Transverse colon (tissue), 4 donors: ENCODE measurements at regions of chr5 and their contacts with region 1.

Region 1: DNA sequence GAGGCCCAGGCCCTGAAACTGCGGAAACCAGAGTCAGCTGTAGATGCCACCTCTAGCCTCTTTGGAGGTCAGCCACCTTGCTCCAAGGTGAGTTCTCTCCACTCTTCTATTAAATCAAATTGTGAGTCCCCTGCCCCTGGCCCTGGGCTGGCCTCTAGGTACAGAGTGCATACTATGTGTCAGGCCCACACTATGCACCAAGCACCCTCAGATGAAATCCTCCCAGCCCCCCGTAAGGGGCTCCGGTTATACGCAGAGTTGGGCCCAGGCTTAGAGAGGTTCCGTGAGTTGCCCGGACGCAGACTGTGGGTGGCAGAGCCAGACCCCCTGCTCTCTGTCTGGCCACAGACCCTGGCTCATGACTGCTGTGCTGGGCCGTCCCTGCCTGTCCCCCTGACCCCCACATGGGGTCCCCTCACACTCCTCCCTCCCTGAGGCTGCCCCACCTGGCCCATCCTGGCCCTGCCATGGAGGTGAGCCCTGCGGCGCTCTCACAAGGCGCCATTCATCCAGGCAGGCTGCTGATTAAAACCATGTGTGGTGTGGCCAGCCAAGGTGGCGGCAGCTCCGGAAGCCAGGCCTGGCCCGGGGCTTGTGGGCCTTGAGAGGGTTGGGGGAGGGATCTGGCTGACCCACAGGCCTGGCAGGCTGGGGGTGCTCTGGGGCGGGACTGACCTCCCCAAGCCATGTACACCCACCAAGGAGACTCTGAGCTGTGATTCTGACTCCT is 65.5 kb upstream of the SYNPO start:
- DNase-seq: no peak
- H3K4me3 ChIP-seq: no peak overlapping the region
- H3K27ac ChIP-seq: no peak overlapping the region
- H3K4me1 ChIP-seq: peaks cover 0 to 8% (median 2%) of the 10 kb centered on the region in 4 donors
- H3K27me3 ChIP-seq: no peaks in the 10 kb centered on the region
- CTCF ChIP-seq: no peak
- EP300 ChIP-seq: no peak
- POLR2A ChIP-seq: no peak

Region 2: GRCh38 chr5:150377964-150378694 is 196.9 kb before region 1 on chr5:
- in situ Hi-C with region 1: no loop called
- intact Hi-C with region 1: no loop called
- DNase-seq: no peak
- H3K4me3 ChIP-seq: no peak overlapping the region
- H3K27ac ChIP-seq: peak overlapping the region; percentile 28 to 54 (median 43)
- H3K4me1 ChIP-seq: peaks cover 0 to 6% (median 0%) of the 10 kb centered on the region in 4 donors
- H3K27me3 ChIP-seq: no peaks in the 10 kb centered on the region
- CTCF ChIP-seq: no peak
- EP300 ChIP-seq: no peak
- POLR2A ChIP-seq: no peak

Region 3: GRCh38 chr5:150672237-150672883 is 97.4 kb after region 1 on chr5:
- in situ Hi-C with region 1: loop called in 1 of 4 experiments (anchors 25 kb)
- intact Hi-C with region 1: loop called (anchors 5 kb)
- DNase-seq: no peak
- H3K4me3 ChIP-seq: peak overlapping the region; percentile 27 to 48 (median 33)
- H3K27ac ChIP-seq: peak overlapping the region in 1 of 4 donors; percentile 4
- H3K4me1 ChIP-seq: peaks cover 6 to 20% (median 15%) of the 10 kb centered on the region in 4 donors
- H3K27me3 ChIP-seq: peaks cover 30% of the 10 kb centered on the region
- CTCF ChIP-seq: no peak
- EP300 ChIP-seq: no peak
- POLR2A ChIP-seq: no peak

Region 4: GRCh38 chr5:150731669-150732242 is 156.8 kb after region 1 on chr5:
- in situ Hi-C with region 1: no loop called
- intact Hi-C with region 1: no loop called
- DNase-seq: no peak
- H3K4me3 ChIP-seq: no peak overlapping the region
- H3K27ac ChIP-seq: peak overlapping the region in 1 of 4 donors; percentile 19
- H3K4me1 ChIP-seq: peaks cover 0 to 8% (median 4%) of the 10 kb centered on the region in 4 donors
- H3K27me3 ChIP-seq: no peaks in the 10 kb centered on the region
- CTCF ChIP-seq: no peak
- EP300 ChIP-seq: no peak
- POLR2A ChIP-seq: no peak

Region 5: DNA sequence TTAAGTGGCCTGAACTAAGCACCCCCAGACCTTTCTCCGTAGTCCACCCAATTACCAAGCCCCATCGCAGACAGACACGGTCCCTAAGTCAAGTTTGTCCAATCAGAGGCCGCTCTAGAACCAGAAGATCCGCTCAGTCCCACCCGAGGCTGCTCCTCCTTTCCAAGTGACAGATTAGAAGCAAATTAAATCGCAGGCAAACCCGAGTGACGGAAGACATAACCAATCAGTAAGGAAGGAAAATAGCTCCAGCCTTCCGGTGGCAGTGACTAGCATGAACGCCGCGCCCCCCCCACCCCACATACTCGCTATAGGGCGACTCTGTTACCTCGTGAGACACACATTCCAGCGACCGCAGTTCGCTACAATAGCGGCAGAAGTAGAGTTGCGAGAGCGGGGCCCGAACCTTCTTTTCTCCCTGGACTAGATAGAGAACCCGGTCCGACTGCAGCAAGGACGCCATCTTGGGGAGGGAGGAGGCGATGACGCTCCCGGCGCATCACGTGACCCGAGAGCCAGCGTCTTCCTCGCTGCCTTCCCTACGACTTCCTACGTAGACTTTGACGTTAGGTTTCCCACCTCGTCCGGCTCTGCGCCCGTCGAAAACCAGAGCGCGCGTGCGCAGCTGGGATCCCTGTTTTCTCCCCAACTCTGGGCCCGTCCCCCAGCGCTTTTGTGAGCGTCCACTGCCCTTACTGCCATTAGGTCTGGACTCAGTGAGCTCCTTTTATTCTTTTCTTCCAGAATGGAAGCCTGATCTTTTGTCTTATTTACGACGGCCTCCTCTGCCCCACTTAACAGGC is 183.7 kb after region 1 on chr5 and contains the start of gene DCTN4:
- in situ Hi-C with region 1: no loop called
- intact Hi-C with region 1: no loop called
- DNase-seq: peak; percentile 96
- H3K4me3 ChIP-seq: peak within 1 kb of the TSS; percentile 54 to 60 (median 56)
- H3K27ac ChIP-seq: peak within 1 kb of the TSS; percentile 90 to 95 (median 94)
- H3K4me1 ChIP-seq: peaks cover 8 to 37% (median 18%) of the 10 kb centered on the region in 4 donors
- H3K27me3 ChIP-seq: no peaks in the 10 kb centered on the region
- CTCF ChIP-seq: peak in 1 of 5 experiments; percentile 16
- EP300 ChIP-seq: no peak
- POLR2A ChIP-seq: peak; percentile 47
- total RNA-seq, gene DCTN4: 23.2 to 55.3 (median 42.4) TPM

Region 6: DNA sequence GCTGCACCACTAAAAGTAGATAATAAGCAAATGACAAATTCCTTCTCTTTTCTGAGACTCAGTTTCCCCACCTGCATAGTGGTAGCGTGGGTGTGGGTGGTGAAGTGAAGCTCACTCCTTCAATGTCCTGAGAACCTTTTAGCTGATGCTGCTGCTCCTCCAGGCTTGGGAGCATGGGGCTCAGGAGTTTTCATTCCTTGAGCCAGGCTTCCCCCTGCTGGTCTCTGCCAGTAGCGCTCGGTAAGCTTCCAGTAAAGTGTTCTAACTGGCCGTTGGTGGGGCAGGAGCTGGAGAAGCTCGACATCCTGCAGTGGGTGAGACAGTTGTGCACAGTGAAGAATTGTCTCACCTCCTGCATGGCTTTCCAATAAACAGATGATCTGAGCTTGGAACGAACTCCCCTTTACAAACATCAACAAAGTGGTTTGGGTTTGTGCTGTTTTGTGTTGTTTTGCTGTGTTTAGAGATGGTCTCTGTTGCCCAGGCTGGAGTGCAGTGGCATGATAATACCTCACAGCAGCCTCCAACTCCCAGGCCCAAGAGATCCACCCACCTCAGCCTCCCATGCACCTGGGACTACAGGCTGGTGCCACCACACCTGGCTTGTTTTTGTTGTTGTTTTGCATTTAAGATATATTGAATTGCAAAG is 1077.1 kb after region 1 on chr5:
- in situ Hi-C with region 1: no loop called
- intact Hi-C with region 1: no loop called
- DNase-seq: peak; percentile 78
- H3K4me3 ChIP-seq: no peak overlapping the region
- H3K27ac ChIP-seq: no peak overlapping the region
- H3K4me1 ChIP-seq: no peaks in the 10 kb centered on the region
- H3K27me3 ChIP-seq: no peaks in the 10 kb centered on the region
- CTCF ChIP-seq: peak; percentile 67 to 78 (median 71)
- EP300 ChIP-seq: no peak
- POLR2A ChIP-seq: no peak